ENCODE measurements at regions of chr7 and their contacts with region 1.

Region 1: DNA sequence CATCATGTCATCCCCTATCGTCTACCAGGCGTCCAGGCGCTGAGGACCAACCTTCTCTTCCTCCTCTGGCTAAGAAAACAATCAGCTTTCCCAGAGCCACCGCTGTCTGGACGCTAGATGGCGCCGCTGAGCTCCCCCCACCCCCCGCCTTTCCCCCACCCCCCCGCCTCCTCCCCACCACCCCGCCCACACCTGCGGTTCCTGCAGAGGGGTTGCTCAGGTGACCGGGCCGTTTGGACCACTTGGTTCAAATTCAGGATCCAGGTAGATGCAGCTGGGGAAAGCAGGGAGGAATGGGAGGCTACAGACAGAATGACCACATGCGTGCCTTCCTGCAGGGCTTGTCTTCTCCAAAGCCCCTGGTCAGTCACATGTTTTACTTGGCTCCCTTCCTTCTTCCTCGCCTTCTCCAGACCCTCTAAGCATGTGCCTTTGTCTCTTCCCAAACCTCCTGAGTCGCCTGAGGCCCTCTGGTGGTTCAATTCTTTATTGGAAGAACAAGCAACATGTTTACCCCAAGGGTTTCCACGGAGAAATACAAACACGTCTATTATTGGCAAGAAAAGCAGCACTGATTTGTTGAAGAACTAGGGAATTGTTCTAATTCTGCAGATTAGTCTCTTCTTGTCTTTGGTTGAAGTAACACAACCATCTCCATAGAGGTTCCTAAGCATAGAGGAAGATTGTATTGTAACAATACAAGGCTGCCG is 24.7 kb downstream of the AOC1 start:
- DNase-seq: peak; percentile 45 to 74 (median 60)
- H3K4me3 ChIP-seq: no peak overlapping the region
- H3K27ac ChIP-seq: no peak overlapping the region
- H3K4me1 ChIP-seq: peaks cover 0 to 4% of the 10 kb centered on the region in 2 donors
- H3K27me3 ChIP-seq: no peaks in the 10 kb centered on the region
- CTCF ChIP-seq: peak; percentile 18 to 69 (median 56)
- POLR2A ChIP-seq: no peak

Region 2: GRCh38 chr7:150753826-150754603 is 123.0 kb before region 1 on chr7:
- intact Hi-C with region 1: no loop called
- DNase-seq: no peak
- H3K4me3 ChIP-seq: no peak overlapping the region
- H3K27ac ChIP-seq: no peak overlapping the region
- H3K4me1 ChIP-seq: peaks cover 0 to 3% of the 10 kb centered on the region in 2 donors
- H3K27me3 ChIP-seq: peaks cover 2% of the 10 kb centered on the region
- CTCF ChIP-seq: peak in 3 of 6 experiments; percentile 18 to 30 (median 27)
- POLR2A ChIP-seq: no peak

Region 3: DNA sequence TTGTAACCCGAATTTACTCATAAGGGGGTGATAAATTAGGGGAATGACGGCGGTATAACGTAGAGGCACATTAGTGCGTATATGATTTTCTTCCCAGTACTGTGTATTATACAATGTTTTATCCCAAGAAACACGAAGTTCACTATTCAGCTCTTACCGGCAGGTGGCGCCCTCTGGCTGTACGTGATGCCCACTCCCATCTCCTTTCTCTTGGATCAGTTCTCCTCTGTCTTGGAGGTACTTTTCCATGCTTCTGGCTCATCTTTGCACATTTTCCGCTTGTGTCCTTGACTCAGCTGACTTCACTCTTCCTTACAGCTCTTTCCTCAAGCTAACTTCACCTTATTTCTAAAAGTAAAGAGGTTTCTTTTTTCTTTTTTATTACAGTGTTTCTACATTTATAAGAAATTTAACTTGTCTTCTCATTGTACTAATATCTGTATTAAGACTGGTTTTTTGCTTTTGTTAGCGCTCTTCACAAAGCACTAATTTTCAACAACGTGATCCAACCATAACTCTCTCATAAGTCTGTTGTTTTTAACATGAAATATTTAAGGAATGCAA is 98.2 kb before region 1 on chr7:
- intact Hi-C with region 1: loop called (anchors 2 to 10 kb)
- DNase-seq: peak; percentile 70 to 96 (median 88)
- H3K4me3 ChIP-seq: no peak overlapping the region
- H3K27ac ChIP-seq: no peak overlapping the region
- H3K4me1 ChIP-seq: peaks cover 0 to 4% of the 10 kb centered on the region in 2 donors
- H3K27me3 ChIP-seq: no peaks in the 10 kb centered on the region
- CTCF ChIP-seq: peak; percentile 82 to 93 (median 89)
- POLR2A ChIP-seq: no peak

Measured in adrenal gland (tissue), 19 donors.